ENCODE measurements at regions of chr1 and their contacts with region 1.

Region 1: DNA sequence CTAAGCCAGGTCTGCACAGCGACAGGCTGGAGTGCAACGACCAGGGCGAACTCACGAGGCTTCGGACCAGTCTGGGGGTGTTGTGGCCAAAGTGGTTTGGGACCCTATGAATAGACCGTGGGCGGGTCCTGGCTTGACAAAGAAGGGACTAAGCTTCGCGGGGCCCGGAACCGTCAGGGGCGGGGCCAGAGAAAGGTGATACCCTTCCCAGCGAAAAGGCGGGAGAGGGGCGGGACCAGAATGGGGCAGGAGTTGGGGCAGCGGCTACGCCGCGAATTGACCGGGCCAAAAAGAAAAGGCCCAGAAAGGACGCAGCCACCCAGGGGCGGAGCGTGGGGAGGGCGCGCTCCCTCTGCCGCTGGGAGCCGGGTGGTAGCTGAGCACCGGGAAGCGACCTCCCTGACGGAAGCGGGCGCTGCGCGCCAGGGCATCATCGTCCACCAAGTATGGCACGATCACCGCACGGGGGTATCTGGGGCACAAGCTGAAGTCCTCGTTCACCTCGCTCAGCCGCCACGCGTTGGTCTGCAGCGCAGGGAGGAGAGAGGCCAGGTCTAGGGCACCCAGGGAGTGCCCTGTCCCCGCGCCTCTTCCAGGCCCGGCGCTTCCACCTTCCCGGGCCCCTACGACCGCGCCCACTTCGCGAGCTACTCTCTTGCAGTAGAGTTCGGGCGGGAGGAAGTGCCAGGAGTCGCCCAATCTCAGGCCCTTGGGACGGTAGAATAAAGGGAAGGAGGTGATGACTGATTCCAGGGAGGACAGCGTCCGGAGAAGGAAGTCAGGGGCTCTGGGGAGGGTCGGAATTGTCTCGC is 6.7 kb upstream of the FAM167B start:
- DNase-seq: no peak
- CTCF ChIP-seq: peak; percentile 22

Region 2: GRCh38 chr1:32223683-32224082 is 16.7 kb before region 1 on chr1:
- CTCF ChIA-PET with region 1: interaction called, 22 read pairs
- POLR2A ChIA-PET with region 1: interaction called, 10 read pairs
- DNase-seq: no peak
- CTCF ChIP-seq: no peak

Region 3: DNA sequence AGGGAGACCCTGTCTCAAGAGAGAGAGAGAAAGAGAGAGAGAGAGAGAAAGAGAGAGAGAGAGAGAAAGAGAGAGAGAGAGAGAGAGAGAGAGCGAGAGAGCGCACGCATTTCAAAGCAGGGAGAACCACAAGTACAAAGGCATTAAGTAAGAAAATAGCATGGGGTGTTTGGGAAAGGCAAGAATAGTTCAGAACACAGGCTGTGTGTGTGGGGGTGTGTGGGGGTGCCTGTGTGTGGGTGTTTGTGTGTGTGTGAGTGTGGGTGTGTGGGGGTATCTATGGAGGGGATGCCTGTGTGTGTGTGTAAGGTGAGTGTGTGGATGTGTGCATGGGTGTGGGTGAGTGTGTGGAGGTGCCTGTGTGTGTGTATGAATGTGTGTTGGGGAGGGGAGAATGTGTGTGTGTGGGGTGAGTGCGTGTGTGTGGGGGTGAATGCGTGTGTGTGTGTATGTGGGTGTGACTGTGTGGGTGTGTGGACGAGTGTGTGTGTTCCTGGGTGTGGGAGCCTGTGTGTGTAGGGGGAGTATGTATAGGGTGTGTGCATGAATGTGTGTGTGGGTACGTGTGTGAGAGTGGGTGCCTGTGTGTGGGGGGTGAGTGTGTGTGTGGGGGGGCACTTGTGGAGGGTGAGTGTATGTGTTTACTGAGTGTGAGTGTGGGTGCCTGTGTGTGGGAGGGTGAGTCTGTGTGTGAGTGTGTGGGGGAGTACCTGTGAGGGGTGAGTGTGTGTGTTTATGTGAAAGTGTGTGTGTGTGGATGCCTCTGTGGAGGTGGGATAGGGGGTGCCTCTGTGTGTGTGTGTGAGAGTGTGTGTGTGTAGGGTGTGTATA is 32.4 kb after region 1 on chr1:
- CTCF ChIA-PET with region 1: no interaction called
- POLR2A ChIA-PET with region 1: no interaction called
- DNase-seq: no peak
- CTCF ChIP-seq: no peak

Measured in GM10248 (cell line).